Sciatic nerve (tissue), 2 donors: ENCODE measurements at regions of chr16 and their contacts with region 1.

Region 1: GRCh38 chr16:12965274-12965804 is 63.9 kb downstream of the SHISA9 start:
- DNase-seq: no peak
- ATAC-seq: no peak

Region 2: GRCh38 chr16:11946433-11946832 is 1018.9 kb before region 1 on chr16:
- intact Hi-C with region 1: no loop called
- DNase-seq: no peak
- ATAC-seq: no peak

Region 3: DNA sequence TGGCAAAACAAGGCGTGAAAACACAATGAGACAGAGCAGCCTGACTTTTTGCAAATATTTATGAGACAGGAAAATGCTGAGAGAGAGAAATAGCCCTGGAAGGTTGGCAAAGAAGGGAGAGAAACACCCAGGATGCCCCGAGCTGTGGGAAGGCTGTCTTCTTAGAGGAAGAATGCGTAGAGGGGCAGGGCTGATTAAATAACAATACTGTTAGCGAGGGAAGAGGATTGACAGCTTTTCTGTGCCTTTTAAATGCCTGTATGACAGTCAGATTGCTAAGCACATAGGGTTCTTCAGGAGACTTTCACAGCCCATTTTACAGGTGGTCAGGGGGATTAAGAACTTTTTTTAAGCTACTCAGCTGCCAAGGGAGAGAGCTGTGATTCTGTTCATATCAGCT is 155.2 kb after region 1 on chr16:
- intact Hi-C with region 1: loop called (anchors 10 kb)
- DNase-seq: no peak
- ATAC-seq: no peak